CD8-positive, alpha-beta T cell (primary cell): ENCODE measurements at regions of chr16 and their contacts with region 1.

Region 1: GRCh38 chr16:47979783-47980182 is 176.0 kb downstream of the ABCC12 start:
- DNase-seq: no peak
- ATAC-seq: no peak
- H3K4me3 ChIP-seq: no peak overlapping the region
- H3K4me3 Mint-ChIP-seq: no peak overlapping the region
- H3K27ac ChIP-seq: no peak overlapping the region
- H3K27ac Mint-ChIP-seq: no peak overlapping the region
- H3K4me1 ChIP-seq: no peaks in the 10 kb centered on the region
- H3K4me1 Mint-ChIP-seq: no peaks in the 10 kb centered on the region
- H3K27me3 ChIP-seq: no peaks in the 10 kb centered on the region
- H3K27me3 Mint-ChIP-seq: peaks cover 5% of the 10 kb centered on the region
- CTCF ChIP-seq: no peak

Region 2: DNA sequence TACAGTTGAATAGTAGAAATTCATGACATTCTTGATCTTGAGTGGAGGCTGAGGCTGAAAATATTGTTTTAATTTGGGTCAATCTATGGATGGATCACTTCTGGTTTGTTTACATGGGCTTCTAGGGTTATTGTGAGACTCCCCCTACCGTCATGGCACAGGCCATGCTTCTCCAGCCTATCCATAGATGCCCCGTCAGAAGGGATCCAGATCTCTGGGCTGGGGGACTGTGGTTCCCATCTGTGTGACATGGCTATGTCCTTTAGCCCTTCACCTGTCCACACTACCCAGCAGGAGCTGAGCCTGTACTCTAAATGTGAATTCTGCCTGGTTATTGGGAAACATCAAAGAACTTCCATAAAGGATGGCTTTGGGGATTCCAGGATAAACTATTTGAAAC is 15.6 kb after region 1 on chr16:
- CTCF ChIA-PET with region 1: no interaction called
- POLR2A ChIA-PET with region 1: no interaction called
- intact Hi-C with region 1: loop called in 1 of 2 experiments (anchors 2 kb)
- DNase-seq: no peak
- ATAC-seq: no peak
- H3K4me3 ChIP-seq: no peak overlapping the region
- H3K4me3 Mint-ChIP-seq: no peak overlapping the region
- H3K27ac ChIP-seq: no peak overlapping the region
- H3K27ac Mint-ChIP-seq: no peak overlapping the region
- H3K4me1 ChIP-seq: no peaks in the 10 kb centered on the region
- H3K4me1 Mint-ChIP-seq: no peaks in the 10 kb centered on the region
- H3K27me3 ChIP-seq: no peaks in the 10 kb centered on the region
- H3K27me3 Mint-ChIP-seq: no peaks in the 10 kb centered on the region
- CTCF ChIP-seq: no peak